ENCODE measurements at regions of chr1 and their contacts with region 1.

Region 1: GRCh38 chr1:8463144-8463927 is 145.4 kb downstream of the SLC45A1 start:
- DNase-seq: peak in 7 of 9 donors; percentile 41 to 68 (median 61)
- ATAC-seq: peak; percentile 75
- H3K4me3 ChIP-seq: no peak overlapping the region
- H3K4me3 Mint-ChIP-seq: peak overlapping the region in 9 of 10 donors; percentile 35 to 80 (median 52)
- H3K27ac ChIP-seq: peak overlapping the region; percentile 43
- H3K27ac Mint-ChIP-seq: peak overlapping the region; percentile 54 to 90 (median 85)
- H3K4me1 ChIP-seq: peaks cover 0 to 31% of the 10 kb centered on the region in 2 donors
- H3K4me1 Mint-ChIP-seq: peaks cover 20 to 82% (median 63%) of the 10 kb centered on the region in 7 donors
- H3K27me3 ChIP-seq: no peaks in the 10 kb centered on the region
- H3K27me3 Mint-ChIP-seq: no peaks in the 10 kb centered on the region

Region 2: DNA sequence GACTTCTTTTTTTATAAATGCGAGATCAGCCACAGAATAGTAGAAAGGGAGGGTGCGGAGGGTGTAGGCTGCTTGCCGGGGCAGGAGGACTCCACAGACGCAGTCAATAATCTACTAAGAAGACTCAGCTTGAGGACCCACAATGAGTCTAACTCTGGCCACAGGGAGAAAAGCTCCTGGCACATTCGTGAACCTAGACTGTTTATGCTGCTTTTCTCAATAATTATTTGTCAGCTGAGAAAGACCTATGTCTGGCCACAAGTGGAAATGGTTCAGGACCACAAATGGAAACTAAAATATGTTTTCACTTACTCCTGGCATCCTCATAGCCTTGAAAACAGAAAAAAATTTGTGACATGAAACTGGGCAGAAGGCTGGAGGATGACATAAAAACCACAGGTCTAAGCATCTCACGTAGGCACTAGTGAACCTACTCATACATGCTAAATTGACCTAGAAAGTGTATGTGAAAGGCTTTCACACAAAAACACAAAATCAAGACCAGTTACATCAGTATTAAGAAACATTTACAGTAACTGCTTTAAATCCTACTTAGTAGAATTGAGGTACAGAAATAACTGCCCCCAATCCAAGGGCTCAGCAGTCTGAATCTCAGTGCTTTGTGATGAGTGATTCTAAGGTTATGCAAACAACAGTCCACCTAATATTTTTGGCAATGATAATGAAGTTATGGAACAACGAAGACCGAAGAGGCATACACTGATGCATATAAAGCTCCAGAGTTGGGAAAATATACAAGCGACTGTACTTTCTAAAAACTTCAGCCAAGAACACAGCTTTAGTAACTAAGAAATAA is 14.0 kb after region 1 on chr1:
- CTCF ChIA-PET with region 1: no interaction called
- POLR2A ChIA-PET with region 1: interaction called, 10 read pairs
- intact Hi-C with region 1: no loop called
- DNase-seq: no peak
- ATAC-seq: no peak
- H3K4me3 ChIP-seq: no peak overlapping the region
- H3K4me3 Mint-ChIP-seq: peak overlapping the region in 1 of 10 donors; percentile 23
- H3K27ac ChIP-seq: no peak overlapping the region
- H3K27ac Mint-ChIP-seq: peak overlapping the region in 7 of 9 donors; percentile 2 to 84 (median 55)
- H3K4me1 ChIP-seq: peaks cover 9 to 12% of the 10 kb centered on the region in 2 donors
- H3K4me1 Mint-ChIP-seq: peaks cover 17 to 58% (median 38%) of the 10 kb centered on the region in 7 donors
- H3K27me3 ChIP-seq: no peaks in the 10 kb centered on the region
- H3K27me3 Mint-ChIP-seq: no peaks in the 10 kb centered on the region